Activated naive CD4-positive, alpha-beta T cell treated with anti-CD3 and anti-CD28 coated beads for 36 hours (primary cell): ENCODE measurements at regions of chr11 and their contacts with region 1.

Region 1: GRCh38 chr11:14643697-14644225 is at the start of gene PDE3B:
- DNase-seq: peak; percentile 85
- H3K4me3 Mint-ChIP-seq: peak within 1 kb of the TSS; percentile 81
- H3K27ac Mint-ChIP-seq: peak within 1 kb of the TSS; percentile 91
- H3K4me1 Mint-ChIP-seq: peaks cover 45% of the 10 kb centered on the region
- H3K27me3 Mint-ChIP-seq: no peaks in the 10 kb centered on the region
- total RNA-seq, gene PDE3B: 16.5 to 17.4 TPM

Region 2: GRCh38 chr11:14499554-14500180 is 144.1 kb before region 1 on chr11 and contains the start of gene COPB1:
- CTCF ChIA-PET with region 1: interaction called, 6 read pairs
- intact Hi-C with region 1: loop called (anchors 1 kb)
- DNase-seq: peak; percentile 97
- H3K4me3 Mint-ChIP-seq: peak within 1 kb of the TSS; percentile 99
- H3K27ac Mint-ChIP-seq: peak within 1 kb of the TSS; percentile 99
- H3K4me1 Mint-ChIP-seq: peaks cover 40% of the 10 kb centered on the region
- H3K27me3 Mint-ChIP-seq: no peaks in the 10 kb centered on the region
- total RNA-seq, gene COPB1: 111 to 112 TPM

Region 3: DNA sequence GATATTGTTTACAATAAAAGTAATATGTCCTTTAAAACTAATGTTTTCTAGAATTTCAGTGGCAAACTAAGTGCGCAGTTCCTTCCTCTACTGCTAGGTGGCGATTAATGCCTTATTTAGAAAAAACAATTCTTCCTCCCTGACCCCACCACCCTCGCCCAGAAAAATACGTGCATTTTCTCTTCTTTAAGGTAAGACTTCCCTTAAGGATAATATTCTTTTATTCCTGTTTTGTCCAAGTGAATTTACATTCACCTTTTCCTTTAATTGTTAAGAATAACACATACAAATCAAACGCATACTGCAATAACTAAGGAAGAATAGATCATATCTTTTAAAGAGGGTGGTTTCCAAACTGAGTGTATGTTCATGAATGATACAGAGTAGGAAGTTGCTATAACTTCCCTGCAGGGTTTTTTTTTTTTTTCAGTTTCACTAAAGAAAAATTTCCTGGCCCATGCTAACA is 106.6 kb before region 1 on chr11:
- CTCF ChIA-PET with region 1: interaction called, 6 read pairs
- intact Hi-C with region 1: loop called (anchors 1 kb)
- DNase-seq: peak; percentile 66
- H3K4me3 Mint-ChIP-seq: peak overlapping the region; percentile 68
- H3K27ac Mint-ChIP-seq: peak overlapping the region; percentile 90
- H3K4me1 Mint-ChIP-seq: peaks cover 32% of the 10 kb centered on the region
- H3K27me3 Mint-ChIP-seq: no peaks in the 10 kb centered on the region

Region 4: GRCh38 chr11:14656536-14657457 is 13.0 kb after region 1 on chr11:
- CTCF ChIA-PET with region 1: no interaction called
- intact Hi-C with region 1: loop called (anchors 1 kb)
- DNase-seq: no peak
- H3K4me3 Mint-ChIP-seq: no peak overlapping the region
- H3K27ac Mint-ChIP-seq: peak overlapping the region; percentile 37
- H3K4me1 Mint-ChIP-seq: peaks cover 58% of the 10 kb centered on the region
- H3K27me3 Mint-ChIP-seq: no peaks in the 10 kb centered on the region

Region 5: GRCh38 chr11:14698771-14699170 is 55.0 kb after region 1 on chr11:
- CTCF ChIA-PET with region 1: interaction called, 5 read pairs
- intact Hi-C with region 1: loop called (anchors 2 kb)
- DNase-seq: no peak
- H3K4me3 Mint-ChIP-seq: peak overlapping the region; percentile 52
- H3K27ac Mint-ChIP-seq: peak overlapping the region; percentile 59
- H3K4me1 Mint-ChIP-seq: peaks cover 46% of the 10 kb centered on the region
- H3K27me3 Mint-ChIP-seq: no peaks in the 10 kb centered on the region

Region 6: DNA sequence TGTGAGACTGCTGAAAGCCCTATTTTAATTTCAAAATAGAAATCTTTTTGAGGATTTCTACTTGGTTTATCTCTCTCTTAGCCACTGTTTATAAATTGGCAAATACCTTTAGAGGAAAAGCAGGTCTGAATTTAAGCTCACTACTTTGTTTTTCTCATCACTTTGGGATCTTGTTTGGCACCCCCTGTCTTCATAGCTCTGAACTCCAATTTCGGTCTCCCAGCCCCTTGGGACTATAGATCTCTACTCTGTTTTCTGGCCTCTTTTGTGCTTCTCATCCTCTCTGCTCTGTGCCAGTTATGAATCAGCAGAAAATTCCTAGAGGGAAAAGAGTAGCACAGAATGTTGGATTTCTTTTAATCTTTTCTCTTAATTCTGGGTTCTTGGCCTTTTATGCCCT is 130.0 kb after region 1 on chr11:
- CTCF ChIA-PET with region 1: interaction called, 11 read pairs
- intact Hi-C with region 1: no loop called
- DNase-seq: peak; percentile 41
- H3K4me3 Mint-ChIP-seq: no peak overlapping the region
- H3K27ac Mint-ChIP-seq: peak overlapping the region; percentile 28
- H3K4me1 Mint-ChIP-seq: peaks cover 55% of the 10 kb centered on the region
- H3K27me3 Mint-ChIP-seq: no peaks in the 10 kb centered on the region